GM12878 (cell line): ENCODE measurements at regions of chr15 and their contacts with region 1.

Region 1: GRCh38 chr15:73908030-73908821 is 18.0 kb upstream of the LOXL1 start:
- DNase-seq: peak; percentile 4
- ATAC-seq: peak; percentile 100
- H3K4me3 ChIP-seq: no peak overlapping the region
- H3K27ac ChIP-seq: no peak overlapping the region
- H3K4me1 ChIP-seq: no peaks in the 10 kb centered on the region
- H3K27me3 ChIP-seq: peaks cover 0 to 6% of the 10 kb centered on the region in 2 experiments; a peak in 2 of 4 replicates
- CTCF ChIP-seq: peak; percentile 92 to 95 (median 93); a peak in 5 of 6 replicates
- EP300 ChIP-seq: no peak
- POLR2A ChIP-seq: no peak
- RAD21 ChIP-seq: peak; percentile 75

Region 2: GRCh38 chr15:73873889-73874511 is 34.2 kb before region 1 on chr15:
- CTCF ChIA-PET with region 1: interaction called, 116 read pairs
- POLR2A ChIA-PET with region 1: no interaction called
- RAD21 ChIA-PET with region 1: interaction called, 6 read pairs
- SMC1A ChIA-PET with region 1: interaction called, 43 read pairs
- in situ Hi-C with region 1: no loop called
- intact Hi-C with region 1: loop called (anchors 1 kb)
- DNase-seq: no peak
- ATAC-seq: peak; percentile 59
- H3K4me3 ChIP-seq: no peak overlapping the region
- H3K27ac ChIP-seq: no peak overlapping the region
- H3K4me1 ChIP-seq: no peaks in the 10 kb centered on the region
- H3K27me3 ChIP-seq: peaks cover 3 to 5% of the 10 kb centered on the region in 2 experiments; a peak in 3 of 4 replicates
- CTCF ChIP-seq: peak; percentile 52 to 70 (median 62)
- EP300 ChIP-seq: no peak
- POLR2A ChIP-seq: no peak
- RAD21 ChIP-seq: peak; percentile 57

Region 3: DNA sequence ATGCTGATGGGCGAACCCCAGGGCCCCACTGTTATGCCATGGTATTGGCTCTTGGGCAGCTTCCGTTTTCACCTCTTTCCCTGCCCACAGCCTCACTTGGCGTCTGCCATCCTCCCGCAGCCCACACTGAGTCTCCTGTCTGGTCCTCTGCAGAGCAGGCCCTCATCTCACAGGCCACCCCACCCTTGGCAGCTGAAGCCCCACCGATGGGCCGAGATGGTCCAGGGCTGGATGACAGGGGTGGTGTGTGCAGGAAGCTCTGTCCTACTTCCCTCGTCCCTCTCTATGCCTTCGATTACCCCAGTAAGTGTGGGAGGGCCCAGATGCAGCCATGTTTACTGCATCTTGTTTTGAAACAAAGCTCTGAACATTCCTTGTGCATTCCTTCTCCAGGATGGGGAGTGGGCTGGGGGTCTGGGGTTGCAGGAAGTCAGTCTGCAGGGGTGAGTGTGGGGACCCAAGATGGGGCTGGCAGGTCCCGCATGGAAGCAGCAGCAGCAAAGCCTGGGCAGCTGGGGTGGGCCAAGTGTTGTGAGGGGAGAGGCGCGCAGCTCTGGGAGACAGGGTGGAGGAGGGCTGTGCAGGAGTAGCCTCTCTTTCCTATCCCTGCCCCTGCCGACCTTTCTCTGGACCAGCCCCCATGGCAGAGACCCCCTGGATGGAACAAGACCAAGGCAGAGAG is 14.0 kb before region 1 on chr15:
- CTCF ChIA-PET with region 1: interaction called, 20 read pairs
- POLR2A ChIA-PET with region 1: no interaction called
- RAD21 ChIA-PET with region 1: no interaction called
- SMC1A ChIA-PET with region 1: interaction called, 5 read pairs
- in situ Hi-C with region 1: no loop called
- intact Hi-C with region 1: no loop called
- DNase-seq: no peak
- ATAC-seq: no peak
- H3K4me3 ChIP-seq: no peak overlapping the region
- H3K27ac ChIP-seq: no peak overlapping the region
- H3K4me1 ChIP-seq: no peaks in the 10 kb centered on the region
- H3K27me3 ChIP-seq: no peaks in the 10 kb centered on the region
- CTCF ChIP-seq: no peak
- EP300 ChIP-seq: no peak
- POLR2A ChIP-seq: no peak
- RAD21 ChIP-seq: no peak